ENCODE measurements at regions of chr4 and their contacts with region 1.

Region 1: DNA sequence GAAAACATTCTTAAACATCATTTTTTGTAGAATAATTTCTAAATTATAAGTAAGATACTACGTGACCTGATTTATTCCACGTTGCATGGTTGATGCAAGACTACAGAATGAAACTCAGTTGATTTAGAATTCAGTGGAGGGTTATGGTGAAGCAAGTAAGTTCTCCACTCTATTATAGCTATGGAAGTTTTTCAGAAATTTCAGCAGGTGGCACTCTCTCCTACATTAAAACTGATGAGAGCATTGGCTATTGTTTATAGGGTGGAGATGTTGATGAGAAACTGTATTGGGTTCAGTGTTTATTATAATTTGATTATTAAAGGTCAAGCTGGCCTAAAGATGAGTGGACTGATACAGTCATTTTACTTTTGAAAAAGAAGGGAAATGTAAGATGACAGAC is 88.0 kb downstream of the FNIP2 start:
- DNase-seq: peak; percentile 15
- ATAC-seq: peak; percentile 89
- H3K4me3 ChIP-seq: no peak overlapping the region
- H3K27ac ChIP-seq: no peak overlapping the region
- H3K4me1 ChIP-seq: no peaks in the 10 kb centered on the region
- H3K27me3 ChIP-seq: no peaks in the 10 kb centered on the region
- CTCF ChIP-seq: peak; percentile 63
- EP300 ChIP-seq: no peak
- POLR2A ChIP-seq: no peak
- RAD21 ChIP-seq: peak; percentile 53; the same call in 1 of the 2 replicates

Region 2: GRCh38 chr4:158729716-158730559 is 126.9 kb before region 1 on chr4:
- CTCF ChIA-PET with region 1: interaction called, 30 read pairs
- POLR2A ChIA-PET with region 1: no interaction called
- in situ Hi-C with region 1: no loop called
- intact Hi-C with region 1: loop called (anchors 1 kb)
- DNase-seq: peak; percentile 67
- ATAC-seq: peak; percentile 99
- H3K4me3 ChIP-seq: peak overlapping the region in 2 of 3 experiments; percentile 13 to 14; a peak in 2 of 6 replicates
- H3K27ac ChIP-seq: no peak overlapping the region
- H3K4me1 ChIP-seq: peaks cover 21% of the 10 kb centered on the region
- H3K27me3 ChIP-seq: no peaks in the 10 kb centered on the region; a peak in 1 of 5 replicates
- CTCF ChIP-seq: peak; percentile 93
- EP300 ChIP-seq: no peak
- POLR2A ChIP-seq: no peak
- RAD21 ChIP-seq: peak; percentile 90

Region 3: GRCh38 chr4:159102622-159103383 is 246.0 kb after region 1 on chr4 and contains the start of gene RAPGEF2:
- CTCF ChIA-PET with region 1: no interaction called
- POLR2A ChIA-PET with region 1: no interaction called
- in situ Hi-C with region 1: no loop called
- intact Hi-C with region 1: loop called (anchors 1 kb)
- DNase-seq: peak; percentile 84
- ATAC-seq: peak; percentile 84
- H3K4me3 ChIP-seq: peak within 1 kb of the TSS; percentile 93 to 99 (median 96)
- H3K27ac ChIP-seq: peak within 1 kb of the TSS; percentile 85
- H3K4me1 ChIP-seq: peaks cover 43% of the 10 kb centered on the region
- H3K27me3 ChIP-seq: no peaks in the 10 kb centered on the region; a peak in 1 of 5 replicates
- CTCF ChIP-seq: peak; percentile 38; the same call in 1 of the 2 replicates
- EP300 ChIP-seq: no peak
- POLR2A ChIP-seq: peak; percentile 63 to 72; a peak in 3 of 4 replicates
- RAD21 ChIP-seq: no peak; the same call in 1 of the 2 replicates
- total RNA-seq, gene RAPGEF2: 23.0 and 24.3 TPM in 2 replicates

Region 4: GRCh38 chr4:159191989-159192388 is 335.1 kb after region 1 on chr4:
- CTCF ChIA-PET with region 1: interaction called, 6 read pairs
- POLR2A ChIA-PET with region 1: no interaction called
- in situ Hi-C with region 1: no loop called
- intact Hi-C with region 1: loop called (anchors 1 kb)
- DNase-seq: peak; percentile 65
- ATAC-seq: peak; percentile 70
- H3K4me3 ChIP-seq: no peak overlapping the region
- H3K27ac ChIP-seq: no peak overlapping the region
- H3K4me1 ChIP-seq: no peaks in the 10 kb centered on the region
- H3K27me3 ChIP-seq: no peaks in the 10 kb centered on the region
- CTCF ChIP-seq: peak; percentile 49
- EP300 ChIP-seq: no peak
- POLR2A ChIP-seq: no peak
- RAD21 ChIP-seq: no peak

Region 5: DNA sequence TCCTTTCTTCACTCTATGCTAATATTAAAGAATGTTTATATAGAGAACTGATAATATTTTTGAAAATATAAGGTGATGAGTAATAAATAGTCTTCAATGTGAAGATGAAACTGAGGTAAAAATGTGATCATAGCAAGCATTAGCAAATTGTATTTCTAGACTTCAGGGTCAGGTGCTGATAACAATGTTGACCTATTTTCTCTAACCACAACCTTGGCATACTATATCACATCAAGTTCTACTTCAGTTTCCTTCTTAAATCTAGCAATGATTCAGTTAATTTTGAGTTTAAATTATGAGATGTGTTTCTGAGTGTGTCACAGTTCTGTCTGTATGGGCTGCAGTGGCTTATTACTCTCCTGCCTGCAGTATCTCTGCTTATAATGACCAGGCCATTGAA is 455.4 kb after region 1 on chr4:
- CTCF ChIA-PET with region 1: no interaction called
- POLR2A ChIA-PET with region 1: no interaction called
- in situ Hi-C with region 1: no loop called
- intact Hi-C with region 1: loop called (anchors 10 kb)
- DNase-seq: no peak
- ATAC-seq: no peak
- H3K4me3 ChIP-seq: no peak overlapping the region
- H3K27ac ChIP-seq: no peak overlapping the region
- H3K4me1 ChIP-seq: no peaks in the 10 kb centered on the region
- H3K27me3 ChIP-seq: no peaks in the 10 kb centered on the region
- CTCF ChIP-seq: no peak
- EP300 ChIP-seq: no peak
- POLR2A ChIP-seq: no peak
- RAD21 ChIP-seq: no peak

Measured in HepG2 (cell line).